HCT116 (cell line): ENCODE measurements at regions of chr16 and their contacts with region 1.

Region 1: GRCh38 chr16:67428146-67428731 is 2.7 kb upstream of the HSD11B2 start:
- DNase-seq: peak; percentile 42
- ATAC-seq: peak; percentile 59
- H3K4me3 ChIP-seq: no peak overlapping the region
- H3K27ac ChIP-seq: no peak overlapping the region; the same call in 1 of the 2 replicates
- H3K4me1 ChIP-seq: peaks cover 6 to 44% of the 10 kb centered on the region in 2 experiments; a peak in 3 of 4 replicates
- H3K27me3 ChIP-seq: no peaks in the 10 kb centered on the region
- CTCF ChIP-seq: peak; percentile 83 to 97 (median 84)
- POLR2A ChIP-seq: no peak
- RAD21 ChIP-seq: peak; percentile 86

Region 2: GRCh38 chr16:67447508-67448076 is 19.4 kb after region 1 on chr16:
- CTCF ChIA-PET with region 1: interaction called, 41 read pairs
- POLR2A ChIA-PET with region 1: interaction called, 3 read pairs
- RAD21 ChIA-PET with region 1: interaction called, 6 to 7 read pairs
- intact Hi-C with region 1: loop called (anchors 1 kb)
- DNase-seq: peak; percentile 54
- ATAC-seq: peak; percentile 99
- H3K4me3 ChIP-seq: no peak overlapping the region
- H3K27ac ChIP-seq: no peak overlapping the region
- H3K4me1 ChIP-seq: peaks cover 0 to 3% of the 10 kb centered on the region in 2 experiments; a peak in 1 of 4 replicates
- H3K27me3 ChIP-seq: no peaks in the 10 kb centered on the region
- CTCF ChIP-seq: peak; percentile 85 to 93 (median 91)
- POLR2A ChIP-seq: no peak
- RAD21 ChIP-seq: peak; percentile 94

Region 3: GRCh38 chr16:67464565-67464964 is 36.3 kb after region 1 on chr16:
- CTCF ChIA-PET with region 1: interaction called, 16 read pairs
- POLR2A ChIA-PET with region 1: interaction called, 6 read pairs
- RAD21 ChIA-PET with region 1: interaction called, 4 to 11 read pairs
- intact Hi-C with region 1: loop called (anchors 1 kb)
- DNase-seq: no peak
- ATAC-seq: no peak
- H3K4me3 ChIP-seq: no peak overlapping the region
- H3K27ac ChIP-seq: no peak overlapping the region
- H3K4me1 ChIP-seq: peaks cover 6 to 19% of the 10 kb centered on the region in 2 experiments; a peak in 3 of 4 replicates
- H3K27me3 ChIP-seq: no peaks in the 10 kb centered on the region
- CTCF ChIP-seq: no peak
- POLR2A ChIP-seq: no peak
- RAD21 ChIP-seq: no peak

Region 4: GRCh38 chr16:67470359-67470758 is 42.1 kb after region 1 on chr16:
- CTCF ChIA-PET with region 1: interaction called, 16 read pairs
- POLR2A ChIA-PET with region 1: interaction called, 6 read pairs
- RAD21 ChIA-PET with region 1: interaction called, 4 to 11 read pairs
- intact Hi-C with region 1: loop called (anchors 1 kb)
- DNase-seq: no peak
- ATAC-seq: no peak
- H3K4me3 ChIP-seq: no peak overlapping the region
- H3K27ac ChIP-seq: no peak overlapping the region
- H3K4me1 ChIP-seq: peaks cover 3 to 8% of the 10 kb centered on the region in 2 experiments; a peak in 3 of 4 replicates
- H3K27me3 ChIP-seq: no peaks in the 10 kb centered on the region
- CTCF ChIP-seq: no peak
- POLR2A ChIP-seq: no peak
- RAD21 ChIP-seq: no peak